ENCODE measurements at regions of chrX and their contacts with region 1.

Region 1: GRCh38 chrX:14029425-14030173 is at the start of gene GEMIN8:
- DNase-seq: peak; percentile 81
- H3K4me3 Mint-ChIP-seq: peak within 1 kb of the TSS; percentile 99
- H3K27ac Mint-ChIP-seq: peak within 1 kb of the TSS; percentile 100
- H3K4me1 Mint-ChIP-seq: peaks cover 37% of the 10 kb centered on the region
- H3K27me3 Mint-ChIP-seq: no peaks in the 10 kb centered on the region
- total RNA-seq, gene GEMIN8: 15.6 and 17.7 TPM in 2 replicates

Region 2: GRCh38 chrX:12791257-12792228 is 1238.1 kb before region 1 on chrX and contains the start of gene PRPS2:
- intact Hi-C with region 1: loop called (anchors 5 kb)
- DNase-seq: peak; percentile 62
- H3K4me3 Mint-ChIP-seq: peak within 1 kb of the TSS; percentile 88
- H3K27ac Mint-ChIP-seq: peak within 1 kb of the TSS; percentile 76
- H3K4me1 Mint-ChIP-seq: peaks cover 41% of the 10 kb centered on the region
- H3K27me3 Mint-ChIP-seq: peaks cover 8% of the 10 kb centered on the region
- total RNA-seq, gene PRPS2: 115 and 116 TPM in 2 replicates

Region 3: DNA sequence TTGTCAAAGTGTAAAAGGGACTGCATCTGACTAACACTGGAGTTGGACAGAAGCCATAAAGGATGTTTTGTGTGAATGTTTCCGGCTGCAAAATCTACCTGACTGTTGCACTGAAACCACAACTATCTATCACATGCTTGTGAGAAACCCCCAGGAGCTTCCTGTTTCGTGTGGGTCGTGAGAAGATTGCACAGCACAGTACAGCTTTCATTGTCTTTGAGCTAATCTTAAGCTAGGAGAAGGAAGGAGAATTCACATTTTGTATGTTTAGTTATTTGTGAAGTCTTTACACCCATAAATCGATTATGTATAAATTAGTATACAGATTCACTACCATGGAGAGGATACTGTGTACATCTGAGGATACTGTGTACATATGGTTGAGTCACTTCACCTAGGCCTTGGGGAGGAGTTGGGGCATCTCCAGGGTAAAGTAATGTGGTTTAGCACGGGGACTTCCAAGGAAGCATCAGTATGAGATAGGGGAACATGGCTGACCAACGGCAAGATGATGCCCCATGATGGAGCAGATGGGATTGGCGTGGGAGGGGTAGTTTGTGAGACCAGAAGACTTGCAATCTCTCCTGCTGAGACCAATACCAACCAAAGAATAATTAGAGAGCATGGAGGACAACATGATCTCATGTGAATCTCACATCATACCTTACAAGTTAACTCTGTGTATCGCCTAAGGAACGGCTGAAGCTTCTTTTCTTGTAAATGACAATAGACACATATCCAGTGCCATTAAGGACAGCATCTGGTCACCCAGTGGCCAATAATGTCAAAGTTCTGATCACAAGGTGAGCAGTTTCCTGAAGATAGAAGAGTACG is 942.1 kb before region 1 on chrX:
- intact Hi-C with region 1: loop called (anchors 5 kb)
- DNase-seq: peak; percentile 64
- H3K4me3 Mint-ChIP-seq: peak overlapping the region; percentile 79
- H3K27ac Mint-ChIP-seq: peak overlapping the region; percentile 100
- H3K4me1 Mint-ChIP-seq: peaks cover 94% of the 10 kb centered on the region
- H3K27me3 Mint-ChIP-seq: no peaks in the 10 kb centered on the region

Region 4: DNA sequence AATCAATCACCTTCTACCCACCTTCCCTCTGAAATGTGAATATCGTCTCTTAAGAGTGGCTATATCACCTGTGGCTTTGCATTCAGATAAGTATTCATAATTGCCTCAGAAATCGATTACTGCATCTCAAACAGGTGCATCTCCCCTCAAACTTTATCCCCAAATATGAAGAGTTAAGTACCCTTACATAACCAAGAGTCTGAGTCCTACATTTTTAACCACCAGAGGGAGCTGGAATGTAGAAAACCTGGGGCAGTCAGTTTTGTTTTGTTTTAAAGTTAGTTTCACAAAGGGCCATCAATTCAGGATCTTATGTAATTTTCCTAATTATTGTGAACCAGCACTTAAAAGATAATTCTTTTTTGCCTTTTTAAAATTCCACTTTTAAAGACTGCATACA is 371.0 kb before region 1 on chrX:
- intact Hi-C with region 1: loop called (anchors 1 kb)
- DNase-seq: no peak
- H3K4me3 Mint-ChIP-seq: no peak overlapping the region
- H3K27ac Mint-ChIP-seq: no peak overlapping the region
- H3K4me1 Mint-ChIP-seq: peaks cover 23% of the 10 kb centered on the region
- H3K27me3 Mint-ChIP-seq: no peaks in the 10 kb centered on the region

Region 5: DNA sequence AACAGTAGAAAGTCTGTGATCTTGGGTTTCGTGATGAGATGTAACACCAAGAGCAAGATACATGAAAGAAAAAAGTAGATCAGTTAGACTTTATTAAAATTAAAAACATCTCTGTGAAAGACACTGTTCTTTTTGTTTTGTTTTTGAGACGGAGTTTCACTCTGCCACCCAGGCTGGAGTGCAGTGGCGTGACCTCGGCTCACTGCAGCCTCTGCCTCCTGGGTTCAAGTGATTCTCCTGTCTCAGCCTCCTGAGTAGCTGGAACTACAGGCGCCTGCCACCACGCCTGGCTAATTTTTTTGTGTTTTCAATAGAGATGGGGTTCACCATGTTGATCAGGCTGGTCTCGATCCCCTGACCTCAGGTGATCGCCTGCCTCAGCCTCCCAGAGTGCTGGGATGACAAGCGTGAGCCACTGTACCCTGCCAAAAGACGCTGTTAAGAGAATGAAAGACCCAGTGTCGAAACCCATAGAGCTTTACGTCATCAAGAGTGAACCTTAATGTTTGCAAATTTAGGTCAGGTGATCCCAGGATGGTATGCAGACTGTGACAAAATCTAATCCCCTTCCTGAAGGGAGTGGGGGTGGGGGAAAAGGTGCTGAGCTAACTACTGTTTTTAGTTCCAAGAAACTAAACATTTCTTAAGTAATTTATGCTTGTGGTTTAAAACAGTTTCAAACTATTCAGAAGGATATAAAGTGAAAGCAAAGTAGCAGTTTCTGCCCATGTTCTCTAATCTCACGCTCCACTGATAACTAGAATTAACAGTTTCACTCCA is 287.0 kb before region 1 on chrX:
- intact Hi-C with region 1: loop called (anchors 2 kb)
- DNase-seq: peak; percentile 8
- H3K4me3 Mint-ChIP-seq: peak overlapping the region; percentile 51
- H3K27ac Mint-ChIP-seq: peak overlapping the region; percentile 55
- H3K4me1 Mint-ChIP-seq: peaks cover 21% of the 10 kb centered on the region
- H3K27me3 Mint-ChIP-seq: no peaks in the 10 kb centered on the region

Region 6: GRCh38 chrX:13786048-13786447 is 243.6 kb before region 1 on chrX:
- intact Hi-C with region 1: no loop called
- DNase-seq: no peak
- H3K4me3 Mint-ChIP-seq: no peak overlapping the region
- H3K27ac Mint-ChIP-seq: no peak overlapping the region
- H3K4me1 Mint-ChIP-seq: no peaks in the 10 kb centered on the region
- H3K27me3 Mint-ChIP-seq: no peaks in the 10 kb centered on the region

Region 7: DNA sequence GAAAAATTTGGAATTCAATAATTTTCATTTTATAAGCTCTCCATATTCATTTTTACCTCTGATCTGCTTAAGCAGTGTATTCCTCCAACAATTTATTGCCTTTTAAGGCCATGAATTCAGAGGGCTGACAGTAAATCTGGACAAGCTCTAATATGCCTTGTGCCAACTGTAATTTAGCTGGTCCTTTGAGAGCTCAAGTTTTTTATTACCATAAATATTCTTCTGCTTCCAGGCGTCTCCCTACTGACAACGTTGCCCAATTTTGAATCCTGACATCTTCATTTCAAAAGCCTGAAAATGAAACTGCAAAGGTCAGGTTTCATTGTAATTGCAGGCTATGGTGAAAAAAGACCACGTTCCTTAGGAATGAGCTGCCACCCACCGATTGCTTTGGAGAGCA is 95.9 kb after region 1 on chrX:
- intact Hi-C with region 1: no loop called
- DNase-seq: no peak
- H3K4me3 Mint-ChIP-seq: no peak overlapping the region
- H3K27ac Mint-ChIP-seq: no peak overlapping the region
- H3K4me1 Mint-ChIP-seq: no peaks in the 10 kb centered on the region
- H3K27me3 Mint-ChIP-seq: peaks cover 2% of the 10 kb centered on the region

Region 8: DNA sequence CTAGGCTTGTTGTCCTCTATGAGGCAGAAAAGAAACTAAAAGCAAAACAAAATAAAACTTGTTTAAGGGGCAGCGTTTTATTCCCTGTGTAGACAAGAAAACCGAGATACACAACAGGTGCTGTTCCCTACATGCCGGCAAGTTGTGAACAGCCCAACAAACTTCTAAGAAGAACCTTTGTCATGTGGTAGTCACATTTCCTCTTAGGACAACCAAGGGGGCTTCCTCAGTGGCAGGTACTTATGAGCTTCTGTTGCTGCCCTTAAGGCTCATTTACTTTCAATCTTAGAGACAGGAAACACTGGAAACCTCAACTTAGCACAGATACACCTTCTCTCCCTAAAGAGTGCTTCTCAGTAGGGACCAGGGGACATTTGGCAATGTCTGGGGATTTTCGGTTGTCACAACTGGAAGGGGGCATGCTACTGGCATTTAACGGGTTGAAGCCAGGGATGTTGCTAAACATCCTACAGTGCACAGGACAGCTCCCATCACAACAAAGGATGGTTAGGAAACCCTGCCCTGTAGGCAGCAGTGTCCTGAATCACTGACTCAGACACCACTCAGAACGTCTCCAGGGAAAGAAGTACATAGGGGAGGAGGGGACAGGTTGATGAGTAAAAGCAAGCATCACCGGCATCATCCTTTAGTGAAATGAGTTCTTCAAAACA is 1129.3 kb after region 1 on chrX:
- intact Hi-C with region 1: loop called (anchors 2 kb)
- DNase-seq: peak; percentile 14
- H3K4me3 Mint-ChIP-seq: peak overlapping the region; percentile 86
- H3K27ac Mint-ChIP-seq: peak overlapping the region; percentile 88
- H3K4me1 Mint-ChIP-seq: peaks cover 24% of the 10 kb centered on the region
- H3K27me3 Mint-ChIP-seq: no peaks in the 10 kb centered on the region